Astrocyte of the cerebellum (primary cell): ENCODE measurements at regions of chr1 and their contacts with region 1.

Region 1: DNA sequence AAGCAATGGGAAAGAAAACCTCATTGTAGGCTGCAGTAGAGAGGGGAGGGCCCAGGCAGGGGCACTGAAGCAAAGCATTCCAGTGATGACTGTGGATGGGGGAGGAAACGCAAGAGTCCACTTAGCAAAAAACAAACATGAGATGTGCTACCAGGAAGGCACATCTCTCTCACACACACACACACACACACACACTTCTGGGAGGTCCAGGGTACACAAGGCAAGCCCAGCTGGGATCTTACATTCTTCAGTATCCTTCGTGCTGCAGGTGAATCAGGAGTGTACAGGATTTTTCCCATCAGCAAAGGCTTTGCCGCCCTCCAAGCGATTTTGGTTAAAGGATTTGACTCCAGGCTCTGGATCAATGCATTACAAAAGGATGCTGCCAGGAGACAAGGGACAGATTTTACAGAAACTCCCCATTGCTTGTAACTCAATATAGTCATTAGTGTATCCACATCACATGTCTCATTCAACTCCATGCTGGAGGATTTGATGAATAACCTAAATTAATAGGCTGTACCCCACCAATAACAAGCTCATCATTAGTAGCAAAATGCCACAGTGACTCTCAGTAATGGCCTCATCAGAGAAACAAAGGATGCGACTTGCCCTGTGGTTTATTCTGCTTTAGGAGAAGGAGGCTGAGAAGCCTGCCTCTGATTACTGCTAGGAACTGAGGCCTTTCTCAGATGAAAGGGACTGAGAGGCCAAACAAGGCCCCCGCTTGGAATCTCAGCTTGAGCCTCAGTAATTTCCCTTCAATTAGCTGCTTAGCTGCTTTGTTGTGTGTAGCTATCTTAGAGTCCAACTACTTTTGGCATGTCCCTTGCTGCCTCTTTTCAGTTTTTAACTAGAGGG is 41.6 kb downstream of the ABCA4 start:
- DNase-seq: no peak
- H3K4me3 ChIP-seq: no peak overlapping the region
- CTCF ChIP-seq: no peak

Region 2: GRCh38 chr1:93528412-93528811 is 550.9 kb before region 1 on chr1:
- in situ Hi-C with region 1: no loop called
- DNase-seq: no peak
- H3K4me3 ChIP-seq: no peak overlapping the region
- CTCF ChIP-seq: no peak

Region 3: GRCh38 chr1:93591676-93592550 is 487.4 kb before region 1 on chr1:
- in situ Hi-C with region 1: no loop called
- DNase-seq: no peak
- H3K4me3 ChIP-seq: no peak overlapping the region
- CTCF ChIP-seq: no peak

Region 4: DNA sequence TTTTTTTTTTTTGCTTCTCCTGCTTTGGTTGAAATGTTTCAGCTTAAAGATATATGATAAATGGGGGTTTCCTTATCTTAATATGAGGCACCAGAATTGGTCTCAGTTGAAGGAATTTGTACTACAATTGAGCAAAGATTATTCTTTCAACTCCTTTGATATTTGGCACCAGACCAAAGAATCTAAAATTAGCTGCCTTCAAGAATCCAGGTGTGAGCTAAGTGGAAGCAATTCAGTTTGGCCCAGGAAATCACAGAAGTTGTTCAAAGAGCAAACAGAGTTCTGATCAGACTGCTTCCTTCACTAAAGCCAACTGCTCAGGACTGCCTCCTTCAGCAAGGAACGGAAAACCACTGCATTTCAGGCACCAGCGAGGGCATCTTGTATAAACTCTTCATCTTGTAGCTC is 329.4 kb before region 1 on chr1:
- in situ Hi-C with region 1: no loop called
- DNase-seq: no peak
- H3K4me3 ChIP-seq: no peak overlapping the region
- CTCF ChIP-seq: peak; percentile 25

Region 5: GRCh38 chr1:94012686-94013624 is 66.4 kb before region 1 on chr1:
- in situ Hi-C with region 1: no loop called
- DNase-seq: no peak
- H3K4me3 ChIP-seq: no peak overlapping the region
- CTCF ChIP-seq: no peak

Region 6: GRCh38 chr1:94122201-94122970 is 43.1 kb after region 1 on chr1:
- in situ Hi-C with region 1: loop called (anchors 5 kb)
- DNase-seq: no peak
- H3K4me3 ChIP-seq: no peak overlapping the region
- CTCF ChIP-seq: no peak